PC-3 (cell line): ENCODE measurements at regions of chr10 and their contacts with region 1.

Region 1: GRCh38 chr10:13276749-13277365 is 23.0 kb downstream of the PHYH start:
- DNase-seq: peak; percentile 2
- ATAC-seq: no peak
- H3K4me3 ChIP-seq: no peak overlapping the region
- H3K27ac ChIP-seq: no peak overlapping the region
- H3K4me1 ChIP-seq: no peaks in the 10 kb centered on the region
- H3K27me3 ChIP-seq: no peaks in the 10 kb centered on the region
- CTCF ChIP-seq: peak; percentile 33; the same call in 1 of the 2 replicates

Region 2: GRCh38 chr10:13160934-13161856 is 115.7 kb before region 1 on chr10 and contains the start of gene MCM10:
- CTCF ChIA-PET with region 1: no interaction called
- POLR2A ChIA-PET with region 1: no interaction called
- intact Hi-C with region 1: loop called (anchors 2 kb)
- DNase-seq: peak; percentile 96
- ATAC-seq: peak; percentile 99
- H3K4me3 ChIP-seq: peak within 1 kb of the TSS; percentile 89
- H3K27ac ChIP-seq: no peak within 1 kb of the TSS
- H3K4me1 ChIP-seq: no peaks in the 10 kb centered on the region
- H3K27me3 ChIP-seq: no peaks in the 10 kb centered on the region
- CTCF ChIP-seq: peak; percentile 65
- total RNA-seq, gene MCM10: 14.3 and 16.1 TPM in 2 replicates

Region 3: DNA sequence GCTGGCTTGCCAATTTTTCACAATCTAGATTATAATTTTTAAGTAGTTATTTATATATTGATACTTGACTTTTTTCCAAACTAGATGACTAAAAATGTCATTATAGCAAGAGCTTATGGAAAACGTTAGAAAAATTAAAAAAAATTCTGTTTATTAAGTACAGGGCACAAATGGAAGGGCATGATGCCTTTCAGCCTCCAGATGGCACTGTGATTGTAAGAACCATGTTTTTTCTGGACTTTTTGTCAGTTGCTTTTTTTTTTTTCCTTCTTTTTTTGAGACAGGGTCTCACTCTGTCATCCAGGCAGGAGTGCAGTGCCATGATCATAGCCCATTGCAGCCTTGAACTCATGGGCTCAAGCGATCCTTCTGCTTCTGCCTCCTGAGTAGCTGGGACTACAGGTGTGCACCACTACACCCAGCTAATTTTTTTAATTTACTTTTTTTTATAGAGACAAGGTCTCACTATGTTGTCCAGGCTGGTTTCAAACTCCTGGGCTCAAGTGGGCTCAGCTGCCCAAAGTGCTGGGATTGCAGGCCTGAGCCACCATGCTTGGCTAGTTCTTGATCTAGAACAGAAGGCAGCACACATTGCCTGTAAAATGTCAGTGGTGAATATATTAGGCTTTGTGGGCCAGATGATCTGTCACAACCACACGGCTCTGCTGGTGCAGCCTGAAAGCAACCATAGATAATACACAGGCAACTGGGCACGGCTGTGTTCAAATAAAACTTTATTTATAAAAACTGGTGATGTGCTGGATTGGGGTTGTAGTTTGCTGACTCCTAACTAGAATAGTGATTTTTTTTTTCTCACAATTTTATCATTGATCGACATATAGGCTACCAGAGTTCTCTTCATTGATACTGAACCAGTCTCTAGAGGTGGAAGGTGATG is 70.1 kb before region 1 on chr10:
- CTCF ChIA-PET with region 1: interaction called, 3 read pairs
- POLR2A ChIA-PET with region 1: no interaction called
- intact Hi-C with region 1: loop called (anchors 1 kb)
- DNase-seq: peak; percentile 9
- ATAC-seq: no peak
- H3K4me3 ChIP-seq: no peak overlapping the region
- H3K27ac ChIP-seq: no peak overlapping the region
- H3K4me1 ChIP-seq: no peaks in the 10 kb centered on the region
- H3K27me3 ChIP-seq: no peaks in the 10 kb centered on the region
- CTCF ChIP-seq: peak; percentile 50

Region 4: DNA sequence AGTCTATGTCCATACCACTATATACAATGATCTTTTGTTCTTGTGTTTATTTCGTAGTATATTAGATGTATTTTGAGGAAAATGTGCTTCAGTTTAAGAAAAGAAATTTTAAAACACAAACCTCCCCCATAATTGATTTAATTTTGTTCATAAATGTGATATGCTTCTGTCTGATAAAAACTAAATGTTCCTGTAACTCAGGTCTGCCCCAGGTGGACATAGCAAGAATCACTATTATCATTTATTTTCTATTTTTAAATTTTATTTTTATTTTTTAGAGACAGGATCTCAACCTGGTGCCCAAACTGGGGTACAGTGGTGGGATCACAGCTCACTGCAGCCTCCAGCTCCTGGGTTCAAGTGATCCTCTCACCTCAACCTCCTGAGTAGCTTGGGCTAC is 208.8 kb after region 1 on chr10:
- CTCF ChIA-PET with region 1: no interaction called
- POLR2A ChIA-PET with region 1: no interaction called
- intact Hi-C with region 1: no loop called
- DNase-seq: peak; percentile 1
- ATAC-seq: no peak
- H3K4me3 ChIP-seq: no peak overlapping the region
- H3K27ac ChIP-seq: no peak overlapping the region
- H3K4me1 ChIP-seq: no peaks in the 10 kb centered on the region
- H3K27me3 ChIP-seq: no peaks in the 10 kb centered on the region
- CTCF ChIP-seq: peak; percentile 31; the same call in 1 of the 2 replicates

Region 5: DNA sequence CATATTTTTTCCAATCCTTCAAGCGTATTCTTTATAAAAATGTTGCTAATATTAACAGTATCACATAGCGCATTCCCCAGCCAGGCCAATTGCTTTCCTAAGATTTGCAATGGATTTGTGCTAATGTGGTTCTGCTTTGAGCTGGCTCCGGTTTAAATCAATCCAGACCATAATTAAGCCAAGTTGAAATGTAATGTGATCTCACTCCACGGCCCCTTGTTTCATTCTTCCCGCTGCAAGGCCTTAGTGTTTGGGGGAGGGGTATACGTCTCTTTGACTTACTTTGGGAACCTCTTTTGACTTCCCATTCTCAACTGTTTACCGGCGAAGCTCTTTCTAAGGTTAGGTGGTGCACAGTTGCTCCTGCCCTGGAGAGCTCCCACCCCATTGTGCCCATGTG is 396.3 kb after region 1 on chr10:
- CTCF ChIA-PET with region 1: no interaction called
- POLR2A ChIA-PET with region 1: no interaction called
- intact Hi-C with region 1: no loop called
- DNase-seq: no peak
- ATAC-seq: no peak
- H3K4me3 ChIP-seq: no peak overlapping the region
- H3K27ac ChIP-seq: no peak overlapping the region
- H3K4me1 ChIP-seq: no peaks in the 10 kb centered on the region
- H3K27me3 ChIP-seq: no peaks in the 10 kb centered on the region
- CTCF ChIP-seq: no peak